ENCODE measurements at regions of chr20 and their contacts with region 1.

Region 1: DNA sequence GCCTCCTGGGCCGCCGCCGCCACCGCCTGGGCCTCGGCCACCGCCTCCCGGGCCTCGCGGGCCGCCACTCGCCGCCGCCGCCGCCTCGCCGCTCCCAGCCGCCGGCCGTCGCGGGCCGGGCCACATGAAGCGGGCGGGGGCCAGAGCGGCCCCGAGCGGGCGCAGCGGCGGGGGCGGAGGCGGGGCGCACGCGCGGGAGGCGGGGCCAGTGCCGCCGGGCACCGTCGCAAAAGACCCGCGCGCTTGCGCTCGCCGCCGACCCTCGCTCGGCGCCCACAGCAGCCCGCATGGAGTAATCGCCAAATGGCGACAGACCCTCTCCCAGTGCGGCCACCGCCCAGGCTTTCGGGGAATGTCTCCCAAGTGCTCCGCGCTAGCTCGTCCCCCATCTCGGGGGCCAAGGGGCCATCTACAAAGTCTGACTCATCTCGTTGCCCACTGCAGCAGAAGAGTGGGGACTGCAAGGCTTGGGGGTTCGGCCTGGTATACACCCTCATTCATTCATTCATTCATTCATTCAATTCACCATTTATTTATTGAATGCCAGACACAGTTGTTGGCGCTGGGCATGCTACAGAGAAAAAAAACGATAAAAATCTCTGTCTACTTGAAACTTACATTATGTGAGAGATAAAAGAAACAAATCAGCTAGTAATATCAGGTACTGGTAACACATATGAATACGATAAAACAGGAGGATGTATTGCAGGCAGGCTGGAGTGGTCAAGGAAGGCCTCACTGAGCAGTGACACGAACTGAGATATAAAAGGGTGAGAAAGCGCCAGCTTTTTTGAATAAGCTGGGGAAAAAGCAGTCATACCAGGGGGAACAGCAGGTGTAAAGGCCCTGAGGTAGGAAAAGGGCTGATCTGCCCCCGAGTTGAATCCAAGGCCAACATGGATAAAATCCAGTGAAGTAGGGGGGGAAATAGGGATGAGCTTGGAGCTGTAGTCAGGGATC is at the start of gene B4GALT5:
- DNase-seq: peak; percentile 82 to 90
- ATAC-seq: peak; percentile 85
- H3K4me3 ChIP-seq: peak within 1 kb of the TSS; percentile 85 to 91
- H3K27ac ChIP-seq: peak within 1 kb of the TSS; percentile 50 to 85
- H3K4me1 ChIP-seq: peaks cover 0 to 13% of the 10 kb centered on the region in 2 donors
- H3K27me3 ChIP-seq: no peaks in the 10 kb centered on the region
- total RNA-seq, gene B4GALT5: 35.9 to 38.3 TPM

Region 2: GRCh38 chr20:49562311-49563014 is 151.6 kb before region 1 on chr20:
- intact Hi-C with region 1: no loop called
- DNase-seq: peak; percentile 94 to 96
- ATAC-seq: peak; percentile 91
- H3K4me3 ChIP-seq: no peak overlapping the region
- H3K27ac ChIP-seq: peak overlapping the region; percentile 57 to 99
- H3K4me1 ChIP-seq: peaks cover 0 to 4% of the 10 kb centered on the region in 2 donors
- H3K27me3 ChIP-seq: no peaks in the 10 kb centered on the region

Region 3: DNA sequence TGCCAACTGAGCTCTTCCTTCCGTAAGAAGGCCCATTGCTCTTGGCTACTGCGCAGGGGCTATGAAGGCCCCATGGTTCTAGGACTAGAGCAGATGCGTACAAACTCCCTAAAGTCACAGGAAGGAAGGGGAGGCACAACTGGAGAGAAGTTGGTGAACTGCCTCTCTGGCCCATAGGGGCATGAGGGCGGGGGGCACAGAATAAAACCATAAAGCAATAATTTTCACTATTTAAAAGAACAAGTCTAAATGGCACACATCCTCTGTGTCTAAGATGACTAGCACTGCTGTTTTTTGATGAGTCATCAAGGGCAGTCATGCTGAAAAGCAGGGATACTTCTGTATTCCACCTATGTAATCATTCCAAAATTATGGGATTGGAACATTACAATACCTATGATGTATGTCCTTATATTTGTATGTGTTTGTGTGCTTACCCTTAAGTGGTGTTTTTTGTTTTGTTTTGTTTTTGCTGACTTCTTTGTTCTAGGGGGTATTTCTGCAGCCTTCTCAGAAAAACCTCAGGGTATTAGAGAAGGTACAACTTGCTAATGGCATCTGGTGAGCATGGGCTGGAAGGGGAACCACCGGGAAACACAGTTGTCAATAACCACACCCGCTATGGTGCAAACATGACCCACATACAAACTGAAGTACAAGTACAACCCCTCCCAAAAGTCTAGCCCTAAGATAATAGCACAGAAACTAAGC is 37.3 kb before region 1 on chr20:
- intact Hi-C with region 1: loop called in 1 of 2 experiments (anchors 5 kb)
- DNase-seq: no peak
- ATAC-seq: peak; percentile 42
- H3K4me3 ChIP-seq: no peak overlapping the region
- H3K27ac ChIP-seq: no peak overlapping the region
- H3K4me1 ChIP-seq: peaks cover 10 to 13% of the 10 kb centered on the region in 2 donors
- H3K27me3 ChIP-seq: no peaks in the 10 kb centered on the region

Region 4: DNA sequence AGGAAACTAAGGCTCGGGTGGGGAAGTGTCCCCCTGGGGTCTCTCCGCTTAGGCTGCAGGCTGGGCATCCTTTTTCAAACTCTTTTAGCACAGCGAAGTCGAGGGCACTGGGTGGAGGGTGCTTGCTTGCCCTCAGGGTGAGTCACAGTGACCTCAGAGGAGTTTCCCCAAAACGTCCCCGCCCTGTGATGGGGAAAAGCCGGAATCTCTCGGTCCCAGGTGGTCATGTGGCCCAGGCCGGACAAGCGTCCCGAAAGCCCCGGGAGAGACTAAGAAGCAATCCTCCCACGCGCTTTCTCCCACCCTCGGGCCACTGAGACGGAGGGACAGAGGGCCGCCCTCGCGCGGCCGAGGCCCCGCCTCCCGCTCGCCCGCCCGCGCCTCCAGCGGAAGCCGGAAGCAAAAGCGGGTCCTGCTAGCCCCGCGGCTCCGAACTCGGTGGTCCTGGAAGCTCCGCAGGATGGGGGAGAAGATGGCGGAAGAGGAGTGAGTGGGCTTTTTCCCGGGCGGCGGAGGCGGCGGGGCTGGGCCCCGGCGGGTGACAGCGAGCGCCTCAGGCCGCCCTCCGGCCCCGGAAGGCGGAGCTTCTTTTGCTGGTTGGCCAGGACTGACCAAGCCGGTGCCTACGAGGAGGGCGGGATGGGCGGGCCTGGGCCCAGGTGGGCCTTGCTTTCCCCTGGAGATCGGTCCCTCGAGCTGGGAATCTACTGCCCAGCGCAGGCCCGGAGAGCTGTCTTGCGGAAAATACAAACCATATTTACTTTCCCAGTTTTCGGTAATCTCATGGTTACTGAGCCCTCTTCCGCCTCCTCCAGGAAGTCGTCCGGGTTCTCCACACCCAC is 98.7 kb after region 1 on chr20 and contains the start of gene SLC9A8:
- intact Hi-C with region 1: loop called in 1 of 2 experiments (anchors 5 kb)
- DNase-seq: peak; percentile 95 to 96
- ATAC-seq: peak; percentile 96
- H3K4me3 ChIP-seq: peak within 1 kb of the TSS; percentile 59 to 80
- H3K27ac ChIP-seq: peak within 1 kb of the TSS; percentile 39 to 52
- H3K4me1 ChIP-seq: peaks cover 0 to 6% of the 10 kb centered on the region in 2 donors
- H3K27me3 ChIP-seq: no peaks in the 10 kb centered on the region
- total RNA-seq, gene SLC9A8: 12.5 to 14.6 TPM

Region 5: GRCh38 chr20:49846206-49846807 is 132.3 kb after region 1 on chr20:
- intact Hi-C with region 1: loop called in 1 of 2 experiments (anchors 10 kb)
- DNase-seq: no peak
- ATAC-seq: peak; percentile 70
- H3K4me3 ChIP-seq: no peak overlapping the region
- H3K27ac ChIP-seq: no peak overlapping the region
- H3K4me1 ChIP-seq: peaks cover 5 to 11% of the 10 kb centered on the region in 2 donors
- H3K27me3 ChIP-seq: no peaks in the 10 kb centered on the region

Measured in aorta (tissue), 5 donors.